ENCODE measurements at regions of chr11 and their contacts with region 1.

Region 1: GRCh38 chr11:93234602-93235207 is 36.9 kb upstream of the SLC36A4 start:
- DNase-seq: peak; percentile 69 to 97 (median 86)

Region 2: GRCh38 chr11:93288079-93288478 is 53.4 kb after region 1 on chr11:
- intact Hi-C with region 1: no loop called
- DNase-seq: no peak

Region 3: GRCh38 chr11:93543292-93543977 is 308.7 kb after region 1 on chr11 and contains the start of gene SMCO4:
- intact Hi-C with region 1: loop called (anchors 1 kb)
- DNase-seq: peak; percentile 59 to 96 (median 78)

Region 4: DNA sequence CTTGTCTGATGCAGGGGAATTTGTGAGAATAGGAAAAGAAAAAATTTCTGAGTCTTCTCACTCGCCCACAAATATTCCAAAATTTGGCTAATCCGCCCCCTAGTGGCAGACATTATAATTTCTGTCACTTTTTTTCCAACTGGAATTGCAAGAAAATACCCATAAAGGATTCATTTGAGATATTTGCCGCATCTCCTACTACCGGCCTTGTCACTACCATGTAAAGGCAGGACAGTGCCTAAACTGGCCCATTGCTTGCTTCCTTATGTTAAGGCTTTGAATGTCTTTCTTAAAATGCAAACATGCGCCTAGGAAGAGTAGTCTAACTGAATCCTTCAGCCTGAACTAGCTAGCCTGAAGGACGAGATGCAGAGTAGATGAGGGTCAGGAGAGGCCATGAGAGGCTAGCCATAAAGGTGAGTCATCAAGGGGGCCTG is 417.5 kb after region 1 on chr11:
- intact Hi-C with region 1: loop called (anchors 1 kb)
- DNase-seq: peak in 2 of 10 donors; percentile 7 to 11

Measured in posterior cingulate gyrus (tissue), 11 donors.